Endothelial cell of umbilical vein (primary cell): ENCODE measurements at regions of chr1 and their contacts with region 1.

Region 1: DNA sequence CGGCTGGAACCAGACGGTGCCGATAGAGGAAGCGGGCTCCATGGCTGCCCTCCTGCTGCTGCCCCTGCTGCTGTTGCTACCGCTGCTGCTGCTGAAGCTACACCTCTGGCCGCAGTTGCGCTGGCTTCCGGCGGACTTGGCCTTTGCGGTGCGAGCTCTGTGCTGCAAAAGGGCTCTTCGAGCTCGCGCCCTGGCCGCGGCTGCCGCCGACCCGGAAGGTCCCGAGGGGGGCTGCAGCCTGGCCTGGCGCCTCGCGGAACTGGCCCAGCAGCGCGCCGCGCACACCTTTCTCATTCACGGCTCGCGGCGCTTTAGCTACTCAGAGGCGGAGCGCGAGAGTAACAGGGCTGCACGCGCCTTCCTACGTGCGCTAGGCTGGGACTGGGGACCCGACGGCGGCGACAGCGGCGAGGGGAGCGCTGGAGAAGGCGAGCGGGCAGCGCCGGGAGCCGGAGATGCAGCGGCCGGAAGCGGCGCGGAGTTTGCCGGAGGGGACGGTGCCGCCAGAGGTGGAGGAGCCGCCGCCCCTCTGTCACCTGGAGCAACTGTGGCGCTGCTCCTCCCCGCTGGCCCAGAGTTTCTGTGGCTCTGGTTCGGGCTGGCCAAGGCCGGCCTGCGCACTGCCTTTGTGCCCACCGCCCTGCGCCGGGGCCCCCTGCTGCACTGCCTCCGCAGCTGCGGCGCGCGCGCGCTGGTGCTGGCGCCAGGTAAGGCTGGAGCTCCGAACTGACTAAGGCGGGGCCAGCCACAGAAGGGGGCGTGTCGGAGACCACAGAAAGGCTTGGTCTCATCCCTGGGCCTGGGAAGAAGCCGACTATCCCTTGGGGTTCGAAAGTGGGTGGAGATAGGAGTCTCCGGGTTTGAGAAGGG is 486 bp downstream of the SLC27A3 start:
- DNase-seq: peak; percentile 58
- H3K4me3 ChIP-seq: peak overlapping the region; percentile 25 to 63 (median 49)
- H3K27ac ChIP-seq: no peak overlapping the region
- H3K4me1 ChIP-seq: peaks cover 54% of the 10 kb centered on the region
- H3K27me3 ChIP-seq: no peaks in the 10 kb centered on the region
- CTCF ChIP-seq: no peak
- POLR2A ChIP-seq: no peak

Region 2: GRCh38 chr1:153670859-153671627 is 104.7 kb before region 1 on chr1 and contains the start of gene ILF2:
- CTCF ChIA-PET with region 1: interaction called, 83 read pairs
- POLR2A ChIA-PET with region 1: no interaction called
- dilution Hi-C with region 1: no loop called
- intact Hi-C with region 1: no loop called
- DNase-seq: peak; percentile 100
- H3K4me3 ChIP-seq: peak within 1 kb of the TSS; percentile 69 to 98 (median 92)
- H3K27ac ChIP-seq: peak within 1 kb of the TSS; percentile 85
- H3K4me1 ChIP-seq: peaks cover 11% of the 10 kb centered on the region
- H3K27me3 ChIP-seq: no peaks in the 10 kb centered on the region
- CTCF ChIP-seq: no peak
- POLR2A ChIP-seq: peak; percentile 95
- total RNA-seq, gene ILF2: 271 TPM in 2 replicates

Region 3: GRCh38 chr1:153677718-153678505 is 97.8 kb before region 1 on chr1:
- CTCF ChIA-PET with region 1: interaction called, 83 read pairs
- POLR2A ChIA-PET with region 1: no interaction called
- dilution Hi-C with region 1: no loop called
- intact Hi-C with region 1: loop called (anchors 1 kb)
- DNase-seq: peak; percentile 72
- H3K4me3 ChIP-seq: peak overlapping the region; percentile 15 to 44 (median 22)
- H3K27ac ChIP-seq: no peak overlapping the region
- H3K4me1 ChIP-seq: peaks cover 11% of the 10 kb centered on the region
- H3K27me3 ChIP-seq: peaks cover 4 to 5% of the 10 kb centered on the region in 2 experiments
- CTCF ChIP-seq: peak; percentile 91 to 92
- POLR2A ChIP-seq: no peak

Region 4: GRCh38 chr1:153763365-153764225 is 12.1 kb before region 1 on chr1:
- CTCF ChIA-PET with region 1: interaction called, 12 read pairs
- POLR2A ChIA-PET with region 1: no interaction called
- dilution Hi-C with region 1: no loop called
- intact Hi-C with region 1: loop called (anchors 1 kb)
- DNase-seq: peak; percentile 87
- H3K4me3 ChIP-seq: no peak overlapping the region
- H3K27ac ChIP-seq: peak overlapping the region; percentile 39
- H3K4me1 ChIP-seq: peaks cover 22% of the 10 kb centered on the region
- H3K27me3 ChIP-seq: no peaks in the 10 kb centered on the region
- CTCF ChIP-seq: no peak
- POLR2A ChIP-seq: peak; percentile 43